Prostate gland (tissue), 2 donors: ENCODE measurements at regions of chr14 and their contacts with region 1.

Region 1: GRCh38 chr14:95211721-95212504 is 54.6 kb upstream of the DICER1 start:
- DNase-seq: no peak
- H3K4me3 ChIP-seq: no peak overlapping the region
- H3K27ac ChIP-seq: no peak overlapping the region
- H3K4me1 ChIP-seq: no peaks in the 10 kb centered on the region
- H3K27me3 ChIP-seq: no peaks in the 10 kb centered on the region
- CTCF ChIP-seq: no peak
- POLR2A ChIP-seq: no peak

Region 2: DNA sequence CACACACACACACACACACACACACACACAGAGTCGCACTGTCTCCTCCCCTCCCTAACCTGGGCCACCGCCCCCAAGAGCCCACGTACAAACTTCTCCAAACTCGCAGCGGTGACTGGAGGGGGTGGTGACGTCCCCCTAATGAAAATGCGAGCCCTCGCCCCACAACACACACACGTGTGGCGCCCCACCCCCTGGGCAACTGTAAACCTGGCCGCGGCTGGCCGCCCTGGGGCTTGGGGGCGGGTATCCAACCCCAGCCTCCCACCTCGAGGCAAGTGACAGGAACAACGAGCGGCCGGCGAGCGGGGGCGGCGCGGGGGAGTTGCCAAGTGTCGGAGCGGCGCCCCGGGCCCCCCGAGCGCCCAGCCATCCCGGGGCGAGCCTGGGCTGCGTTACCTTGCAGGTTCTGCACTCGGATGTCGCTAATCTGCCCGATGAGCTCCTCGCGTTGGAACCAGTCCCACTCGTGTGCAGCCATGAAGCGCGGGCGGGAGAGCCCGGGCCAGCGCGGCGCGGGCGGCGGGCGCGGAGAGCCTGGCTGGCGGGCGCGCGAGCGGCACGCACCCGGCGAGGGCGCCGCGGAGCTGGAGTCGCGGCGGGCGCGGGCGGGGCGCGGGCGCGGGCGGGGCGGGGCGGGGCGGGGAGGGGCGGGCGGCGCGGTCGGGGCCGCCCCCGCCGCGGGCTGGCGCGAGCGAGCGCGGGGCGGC is 107.6 kb after region 1 on chr14 and contains the start of gene CLMN:
- intact Hi-C with region 1: loop called (anchors 10 kb)
- DNase-seq: peak; percentile 36
- H3K4me3 ChIP-seq: peak within 1 kb of the TSS; percentile 86 to 90
- H3K27ac ChIP-seq: peak within 1 kb of the TSS; percentile 77 to 78
- H3K4me1 ChIP-seq: peaks cover 4% of the 10 kb centered on the region
- H3K27me3 ChIP-seq: no peaks in the 10 kb centered on the region
- CTCF ChIP-seq: no peak
- POLR2A ChIP-seq: no peak
- total RNA-seq, gene CLMN: 24.6 to 39.3 TPM